ENCODE measurements at regions of chr4 and their contacts with region 1.

Region 1: DNA sequence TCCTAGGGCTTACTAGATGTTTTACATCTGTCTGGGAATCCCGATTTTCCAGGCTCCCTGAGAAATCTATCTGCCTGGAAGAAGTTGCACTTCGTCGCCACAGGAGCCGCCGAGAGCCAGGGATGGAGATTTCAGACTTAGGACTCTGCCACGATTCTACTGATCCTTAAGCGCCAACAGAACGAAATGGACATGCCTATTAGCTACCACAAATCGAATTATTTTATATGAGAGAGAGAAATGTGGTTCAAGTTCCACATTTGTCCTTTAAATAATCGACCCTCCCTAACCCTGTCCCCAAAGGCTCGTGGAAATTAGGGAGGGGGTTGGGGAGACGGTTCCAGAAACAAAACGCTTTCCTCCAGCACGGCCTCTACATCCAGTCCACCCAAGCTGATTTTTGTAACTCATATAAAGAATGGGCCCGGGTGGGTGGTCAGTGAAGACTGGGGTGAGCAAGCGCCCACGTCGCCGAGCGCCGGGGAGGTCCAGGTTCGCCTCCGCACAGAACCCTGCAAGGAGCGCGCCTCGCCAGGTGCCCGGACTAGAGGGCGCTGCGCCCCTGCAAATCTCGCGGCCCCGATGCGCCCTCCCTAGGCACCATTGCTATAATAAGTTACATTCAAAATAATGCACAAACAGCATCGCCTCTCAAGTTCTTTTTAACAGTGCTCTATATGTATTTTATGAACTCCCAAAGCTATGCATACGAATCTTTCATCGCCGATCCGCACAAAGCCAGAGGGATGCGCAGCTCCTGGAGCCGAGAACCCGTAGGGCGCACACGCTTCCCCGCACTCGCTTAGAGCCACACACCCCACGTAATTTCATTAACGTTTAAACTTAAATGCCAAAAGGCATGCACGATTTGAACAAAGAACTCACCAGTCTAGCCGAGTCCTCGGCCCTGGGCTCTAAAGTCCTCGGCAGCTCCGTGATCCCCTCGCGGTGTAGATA is 2.1 kb upstream of the FAT1 start:
- DNase-seq: peak; percentile 68
- ATAC-seq: peak; percentile 74
- H3K4me3 ChIP-seq: peak overlapping the region; percentile 69 to 99 (median 95)
- H3K27ac ChIP-seq: peak overlapping the region; percentile 86
- H3K4me1 ChIP-seq: peaks cover 50% of the 10 kb centered on the region
- H3K27me3 ChIP-seq: no peaks in the 10 kb centered on the region; a peak in 1 of 5 replicates
- CTCF ChIP-seq: peak; percentile 95
- EP300 ChIP-seq: no peak
- POLR2A ChIP-seq: no peak
- RAD21 ChIP-seq: peak; percentile 91

Region 2: DNA sequence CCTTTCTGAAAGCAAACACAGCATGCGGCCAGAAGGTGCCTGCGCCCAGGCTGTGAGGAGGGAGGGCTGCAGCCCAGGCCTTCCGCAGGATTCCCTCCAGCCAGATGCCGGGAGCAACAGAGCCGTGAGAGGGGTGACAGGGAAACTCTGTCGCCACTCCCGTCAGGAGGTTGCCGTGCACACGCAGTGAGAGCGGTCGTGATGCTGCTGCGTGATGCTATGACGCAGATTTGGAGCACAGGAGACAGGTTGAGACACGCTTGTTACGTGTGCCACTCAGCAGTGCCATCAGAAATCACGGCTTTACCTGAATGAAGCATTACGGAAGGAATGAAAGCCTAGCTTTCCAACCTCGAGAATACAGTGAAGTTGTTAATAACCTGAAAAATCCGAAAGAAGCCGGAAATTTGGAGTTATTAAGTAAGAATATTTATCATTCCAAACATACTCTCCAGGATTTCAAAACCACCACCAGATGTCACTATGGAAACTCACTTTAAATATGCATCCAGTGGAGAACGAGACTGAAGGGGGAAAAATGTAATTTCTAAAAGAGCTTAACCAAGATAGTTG is 56.5 kb before region 1 on chr4:
- CTCF ChIA-PET with region 1: interaction called, 10 read pairs
- POLR2A ChIA-PET with region 1: no interaction called
- in situ Hi-C with region 1: no loop called
- intact Hi-C with region 1: loop called (anchors 1 kb)
- DNase-seq: peak; percentile 50
- ATAC-seq: peak; percentile 63
- H3K4me3 ChIP-seq: no peak overlapping the region
- H3K27ac ChIP-seq: no peak overlapping the region
- H3K4me1 ChIP-seq: peaks cover 16% of the 10 kb centered on the region
- H3K27me3 ChIP-seq: no peaks in the 10 kb centered on the region
- CTCF ChIP-seq: peak; percentile 49
- EP300 ChIP-seq: no peak
- POLR2A ChIP-seq: no peak
- RAD21 ChIP-seq: no peak

Region 3: GRCh38 chr4:186765138-186765537 is 39.4 kb after region 1 on chr4:
- CTCF ChIA-PET with region 1: no interaction called
- POLR2A ChIA-PET with region 1: interaction called, 9 read pairs
- in situ Hi-C with region 1: no loop called
- intact Hi-C with region 1: loop called (anchors 2 kb)
- DNase-seq: peak; percentile 73
- ATAC-seq: peak; percentile 84
- H3K4me3 ChIP-seq: peak overlapping the region; percentile 11 to 46 (median 44); a peak in 4 of 6 replicates
- H3K27ac ChIP-seq: peak overlapping the region; percentile 80
- H3K4me1 ChIP-seq: peaks cover 71% of the 10 kb centered on the region
- H3K27me3 ChIP-seq: no peaks in the 10 kb centered on the region
- CTCF ChIP-seq: no peak
- EP300 ChIP-seq: no peak
- POLR2A ChIP-seq: peak in 1 of 2 experiments; percentile 55; a peak in 1 of 4 replicates
- RAD21 ChIP-seq: no peak

Region 4: DNA sequence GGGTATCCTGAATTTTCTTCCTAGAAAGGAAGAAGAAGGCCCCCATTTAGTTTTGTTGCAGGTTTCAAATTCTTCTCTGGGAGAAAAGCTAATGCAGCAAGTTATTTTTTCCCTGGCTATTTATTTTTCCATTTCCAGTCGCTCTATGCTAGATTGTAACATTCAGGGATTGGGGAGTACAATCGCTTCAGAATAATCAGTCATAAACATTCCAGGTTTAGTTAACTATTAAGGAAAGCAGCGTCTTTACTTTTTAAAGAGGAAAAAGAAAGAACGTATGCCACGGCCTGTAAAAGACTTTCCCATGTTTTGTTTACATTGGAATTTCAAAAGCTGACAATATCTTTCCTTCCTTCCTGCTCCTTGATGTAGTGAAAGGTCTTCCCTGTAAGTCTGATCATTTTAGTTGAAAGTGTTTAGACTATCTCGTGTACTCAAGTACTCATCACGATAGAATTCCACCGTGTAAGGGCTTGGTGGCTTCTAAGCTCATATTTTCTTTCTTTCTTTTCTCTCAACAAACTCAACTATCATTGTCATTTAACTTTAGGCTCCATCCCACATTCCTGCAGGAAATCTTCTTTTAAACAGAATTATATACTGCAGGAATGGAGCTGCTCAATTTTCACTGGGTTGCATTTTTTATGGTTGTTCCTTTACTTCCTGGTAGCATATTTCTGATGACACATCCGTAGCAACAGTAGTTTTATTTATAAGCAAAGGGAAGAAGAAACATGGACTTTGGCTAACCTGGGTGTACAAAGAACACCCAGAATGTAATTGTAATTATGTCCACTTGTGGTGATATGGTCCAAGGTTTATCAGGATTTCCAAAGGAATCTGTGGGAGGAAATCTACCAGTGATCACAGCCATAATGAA is 211.0 kb after region 1 on chr4:
- CTCF ChIA-PET with region 1: no interaction called
- POLR2A ChIA-PET with region 1: interaction called, 4 read pairs
- in situ Hi-C with region 1: loop called (anchors 25 kb)
- intact Hi-C with region 1: loop called (anchors 2 kb)
- DNase-seq: peak; percentile 95
- ATAC-seq: peak; percentile 87
- H3K4me3 ChIP-seq: peak overlapping the region; percentile 33 to 55 (median 51); a peak in 5 of 6 replicates
- H3K27ac ChIP-seq: peak overlapping the region; percentile 88
- H3K4me1 ChIP-seq: peaks cover 81% of the 10 kb centered on the region
- H3K27me3 ChIP-seq: no peaks in the 10 kb centered on the region
- CTCF ChIP-seq: peak; percentile 31
- EP300 ChIP-seq: peak; percentile 70 to 82; a peak in 3 of 4 replicates
- POLR2A ChIP-seq: no peak
- RAD21 ChIP-seq: no peak

Region 5: DNA sequence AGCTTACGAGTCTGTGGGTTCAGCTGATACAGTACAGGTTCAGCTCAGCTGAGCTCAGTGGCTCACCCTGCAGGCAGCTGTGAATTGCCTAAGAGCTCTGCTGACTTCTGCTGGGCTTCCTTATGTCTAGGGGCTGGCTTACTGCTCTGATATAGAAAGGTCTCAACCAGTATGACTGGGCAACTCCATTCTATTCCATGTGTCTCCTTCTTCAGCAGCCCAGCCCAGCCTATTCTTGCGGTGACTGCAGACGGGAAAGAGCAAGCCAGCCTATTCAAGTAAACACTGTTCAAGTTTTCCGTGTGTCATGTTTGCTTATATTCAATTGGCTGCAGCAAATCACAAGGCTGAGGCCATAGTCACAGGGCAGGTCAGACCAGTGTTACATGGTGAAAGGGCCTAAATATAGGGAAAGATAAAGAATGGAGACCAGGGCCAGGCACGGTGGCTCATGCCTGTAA is 654.5 kb after region 1 on chr4:
- CTCF ChIA-PET with region 1: interaction called, 3 read pairs
- POLR2A ChIA-PET with region 1: no interaction called
- in situ Hi-C with region 1: no loop called
- intact Hi-C with region 1: loop called (anchors 10 kb)
- DNase-seq: peak; percentile 35
- ATAC-seq: peak; percentile 99
- H3K4me3 ChIP-seq: no peak overlapping the region
- H3K27ac ChIP-seq: no peak overlapping the region
- H3K4me1 ChIP-seq: no peaks in the 10 kb centered on the region
- H3K27me3 ChIP-seq: peaks cover 0 to 3% of the 10 kb centered on the region in 2 experiments; a peak in 2 of 5 replicates
- CTCF ChIP-seq: peak; percentile 57
- EP300 ChIP-seq: no peak
- POLR2A ChIP-seq: no peak
- RAD21 ChIP-seq: no peak